GM23248 (cell line): ENCODE measurements at regions of chr16 and their contacts with region 1.

Region 1: DNA sequence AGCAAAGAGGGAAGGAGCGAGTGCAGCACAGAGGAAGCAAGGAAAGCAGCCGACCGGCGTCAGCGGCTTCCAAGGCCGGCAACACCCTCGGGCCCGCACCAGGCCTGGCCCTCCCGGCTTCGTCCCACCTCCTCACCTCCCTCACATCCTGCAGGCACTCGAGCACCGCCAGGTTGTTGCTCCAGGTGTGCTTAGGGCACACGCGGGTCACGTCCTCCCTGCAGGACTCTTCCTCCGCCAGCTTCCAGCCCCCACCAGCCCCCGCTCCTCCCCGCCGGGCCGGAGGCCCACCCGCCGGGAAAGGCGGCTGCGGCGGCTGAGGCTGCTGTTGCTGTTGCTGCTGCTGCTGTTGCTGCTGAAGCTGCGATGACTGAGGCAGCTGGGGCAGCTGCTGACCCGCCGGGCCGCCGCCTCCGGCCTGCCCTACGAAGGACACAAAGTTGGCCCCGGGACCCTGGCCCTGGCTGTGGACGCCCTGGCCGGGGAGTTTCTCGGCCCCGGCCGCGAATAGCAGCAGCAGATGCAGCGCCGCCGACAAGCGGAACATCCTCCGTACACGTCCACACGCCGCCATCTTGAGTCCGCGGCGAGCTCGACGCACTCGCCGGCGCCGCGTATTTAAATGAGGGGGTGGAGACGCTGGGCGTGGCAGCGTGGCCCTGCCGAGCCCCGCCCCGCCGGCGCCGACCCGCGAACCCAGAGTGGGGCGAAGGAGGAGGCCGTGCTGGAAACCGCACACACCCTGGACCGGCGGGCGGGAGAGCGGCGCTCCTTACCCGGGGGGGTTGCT is at the start of gene GLG1:
- DNase-seq: peak; percentile 98
- H3K4me3 ChIP-seq: peak within 1 kb of the TSS; percentile 93
- H3K27ac ChIP-seq: peak within 1 kb of the TSS; percentile 94
- H3K4me1 ChIP-seq: peaks cover 25% of the 10 kb centered on the region
- H3K27me3 ChIP-seq: no peaks in the 10 kb centered on the region
- total RNA-seq, gene GLG1: 129 and 136 TPM in 2 replicates

Region 2: DNA sequence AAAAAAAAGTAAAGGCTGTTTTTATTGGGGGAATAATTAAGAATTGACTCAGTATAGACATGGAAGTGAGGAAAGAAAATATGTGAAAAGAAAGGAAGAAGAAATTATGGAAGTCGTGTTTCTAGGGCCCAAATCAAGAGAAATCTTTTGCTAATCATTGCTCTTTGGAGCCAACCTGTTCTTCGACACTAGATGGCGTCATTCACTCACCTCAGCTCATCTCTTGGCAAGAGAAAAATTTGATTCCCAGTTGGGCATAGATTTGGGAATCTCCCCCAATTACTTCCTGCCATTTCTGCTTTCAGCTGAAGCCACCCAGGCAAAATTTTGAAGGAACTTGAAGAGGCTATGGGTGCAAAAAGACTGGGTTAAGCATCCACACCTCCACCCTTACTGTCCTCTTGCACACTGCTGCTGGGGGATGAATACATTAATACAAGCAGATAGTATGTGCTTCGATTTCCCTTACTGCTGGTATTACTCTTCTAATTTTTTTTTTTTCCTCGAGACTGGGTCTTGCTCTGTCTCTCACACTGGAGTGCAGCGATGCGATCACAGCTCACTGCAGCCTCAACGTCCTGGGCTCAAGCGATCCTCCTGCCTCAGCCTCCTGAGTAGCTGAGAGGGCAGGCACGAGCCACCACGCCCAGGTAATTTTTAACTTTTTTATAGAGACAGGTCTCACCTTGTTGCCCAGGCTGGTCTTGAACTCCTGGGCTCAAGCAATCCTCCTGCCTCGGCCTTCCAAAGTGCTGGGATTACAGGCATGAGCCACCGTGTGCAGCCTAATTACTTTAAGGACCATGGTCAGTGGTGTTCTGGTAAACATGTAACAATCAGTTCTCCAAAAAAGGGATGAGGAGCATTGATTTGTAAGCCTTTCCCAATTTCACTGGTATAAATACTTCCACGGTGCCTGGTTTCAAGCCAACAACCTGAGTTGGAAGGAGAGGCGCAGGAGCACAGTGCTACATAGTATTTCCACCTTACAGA is 296.6 kb before region 1 on chr16:
- in situ Hi-C with region 1: loop called (anchors 25 kb)
- DNase-seq: peak; percentile 70
- H3K4me3 ChIP-seq: no peak overlapping the region
- H3K27ac ChIP-seq: no peak overlapping the region
- H3K4me1 ChIP-seq: no peaks in the 10 kb centered on the region
- H3K27me3 ChIP-seq: no peaks in the 10 kb centered on the region

Region 3: DNA sequence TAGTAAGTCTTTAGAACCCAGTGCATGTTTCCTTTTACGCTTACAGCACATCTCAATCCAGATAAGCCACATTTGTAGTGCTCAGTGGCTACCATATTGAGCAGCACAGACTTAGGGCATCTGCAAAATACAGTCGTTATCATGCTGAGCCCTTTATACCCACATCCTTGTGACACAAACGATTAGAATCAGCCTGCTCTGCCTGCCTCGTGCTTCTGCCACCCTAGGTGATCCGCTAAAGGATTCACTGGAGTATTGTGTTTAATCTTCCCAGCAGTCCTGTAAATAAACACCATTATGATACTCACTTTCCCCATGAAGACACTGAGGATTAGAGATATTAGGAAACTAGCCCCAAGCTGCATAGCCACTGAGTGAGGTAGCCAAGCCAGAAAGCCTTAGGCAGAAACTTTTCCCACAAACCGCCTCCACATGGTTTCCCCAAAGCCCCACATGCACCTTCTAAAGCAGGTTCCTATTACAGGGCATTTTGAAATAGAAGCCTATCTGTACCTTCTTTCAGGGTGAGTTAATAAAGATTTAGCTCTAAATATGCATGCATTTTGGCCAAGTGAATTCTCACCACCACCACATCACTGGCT is 219.3 kb after region 1 on chr16:
- in situ Hi-C with region 1: no loop called
- DNase-seq: no peak
- H3K4me3 ChIP-seq: no peak overlapping the region
- H3K27ac ChIP-seq: no peak overlapping the region
- H3K4me1 ChIP-seq: no peaks in the 10 kb centered on the region
- H3K27me3 ChIP-seq: peaks cover 29% of the 10 kb centered on the region